ENCODE measurements at regions of chr10 and their contacts with region 1.

Region 1: GRCh38 chr10:16891375-16892313 is 74.4 kb upstream of the RSU1 start:
- DNase-seq: peak; percentile 35 to 95
- H3K4me3 ChIP-seq: peak overlapping the region; percentile 41; the same call in 1 of the 2 replicates
- H3K27ac ChIP-seq: peak overlapping the region; percentile 94
- H3K4me1 ChIP-seq: peaks cover 21% of the 10 kb centered on the region
- H3K27me3 ChIP-seq: peaks cover 6% of the 10 kb centered on the region; the same call in 1 of the 2 replicates
- CTCF ChIP-seq: peak; percentile 30; the same call in 1 of the 2 replicates

Region 2: DNA sequence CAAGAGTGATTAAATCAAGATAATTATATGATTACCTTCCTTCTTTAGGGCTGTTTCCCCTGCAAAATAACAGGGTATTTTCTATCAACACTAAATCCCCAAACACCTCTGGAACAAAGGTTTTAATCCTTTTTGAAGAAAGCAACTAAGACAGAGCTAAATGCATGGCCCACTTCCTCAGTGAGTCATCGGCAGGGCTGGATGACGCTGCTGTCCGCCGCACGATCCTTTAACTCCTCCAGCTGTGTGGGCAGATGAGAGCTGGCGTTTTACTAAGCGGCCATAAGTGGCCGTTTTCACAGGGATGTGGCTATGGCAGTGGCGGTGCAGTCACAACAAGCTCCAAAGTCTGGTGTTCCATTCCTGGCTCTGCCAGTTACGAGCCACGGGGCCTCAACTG is 294.0 kb before region 1 on chr10:
- CTCF ChIA-PET with region 1: no interaction called
- POLR2A ChIA-PET with region 1: no interaction called
- intact Hi-C with region 1: no loop called
- DNase-seq: no peak
- H3K4me3 ChIP-seq: no peak overlapping the region
- H3K27ac ChIP-seq: no peak overlapping the region
- H3K4me1 ChIP-seq: no peaks in the 10 kb centered on the region
- H3K27me3 ChIP-seq: no peaks in the 10 kb centered on the region
- CTCF ChIP-seq: no peak

Region 3: DNA sequence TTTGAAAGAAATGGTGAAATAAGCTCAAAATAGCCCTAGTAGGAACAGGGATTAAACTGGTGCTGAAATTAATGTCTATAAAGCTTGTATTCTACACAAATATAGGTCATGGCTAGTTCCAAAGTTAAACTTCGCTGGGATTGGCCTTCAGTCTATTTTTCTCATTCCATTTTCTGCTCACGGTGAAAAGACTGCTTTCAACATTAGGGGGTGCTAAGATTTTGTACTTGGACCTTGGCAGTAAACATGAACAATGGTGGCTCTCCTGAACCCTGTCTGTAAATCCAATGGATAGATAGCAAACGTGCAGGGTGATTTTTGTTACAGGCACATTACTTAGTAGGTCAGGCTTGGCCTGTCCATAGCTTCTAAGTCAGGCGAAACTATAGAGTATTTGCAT is 38.4 kb before region 1 on chr10:
- CTCF ChIA-PET with region 1: no interaction called
- POLR2A ChIA-PET with region 1: interaction called, 3 read pairs
- intact Hi-C with region 1: loop called (anchors 5 kb)
- DNase-seq: no peak
- H3K4me3 ChIP-seq: no peak overlapping the region
- H3K27ac ChIP-seq: no peak overlapping the region
- H3K4me1 ChIP-seq: no peaks in the 10 kb centered on the region
- H3K27me3 ChIP-seq: no peaks in the 10 kb centered on the region
- CTCF ChIP-seq: no peak

Region 4: GRCh38 chr10:16975188-16975587 is 83.5 kb after region 1 on chr10:
- CTCF ChIA-PET with region 1: no interaction called
- POLR2A ChIA-PET with region 1: interaction called, 13 read pairs
- intact Hi-C with region 1: no loop called
- DNase-seq: no peak
- H3K4me3 ChIP-seq: no peak overlapping the region
- H3K27ac ChIP-seq: no peak overlapping the region
- H3K4me1 ChIP-seq: no peaks in the 10 kb centered on the region
- H3K27me3 ChIP-seq: no peaks in the 10 kb centered on the region
- CTCF ChIP-seq: no peak

Region 5: DNA sequence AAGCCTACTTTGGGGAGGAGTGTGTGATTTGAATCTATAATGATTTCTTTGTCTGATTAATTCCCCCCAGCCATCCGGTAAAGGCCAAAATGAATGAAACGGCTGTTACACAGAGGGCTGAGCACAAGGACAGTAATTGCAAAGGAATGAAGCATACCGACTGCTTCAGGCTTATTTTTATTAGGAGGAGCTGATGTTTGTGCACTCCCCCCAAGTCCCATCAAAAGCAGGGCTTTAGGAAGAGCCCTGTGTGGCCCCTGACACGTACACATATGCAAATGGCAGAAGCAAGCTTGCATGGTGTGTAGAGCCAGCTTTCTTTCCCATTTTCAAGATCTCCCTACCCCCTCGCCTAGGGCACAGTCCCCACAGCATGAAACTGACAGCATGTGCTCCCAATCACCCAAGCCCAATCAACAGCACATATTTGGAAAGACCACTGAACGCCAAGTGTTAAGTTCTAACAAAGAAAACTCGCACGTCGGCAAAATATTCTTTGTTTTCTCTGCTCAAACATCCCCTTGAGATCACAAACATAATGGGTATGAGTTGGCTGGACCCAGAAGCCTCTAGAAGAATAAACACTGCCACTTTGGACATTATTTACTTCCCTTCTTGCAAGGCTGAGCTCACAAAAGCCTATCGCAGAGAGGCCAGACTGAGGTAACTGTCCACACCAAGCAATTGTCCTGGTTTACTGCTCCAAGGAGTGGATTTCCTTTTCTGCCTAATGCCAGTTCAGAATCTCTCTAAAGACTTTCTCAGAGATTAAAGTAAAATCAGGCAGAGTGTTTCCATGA is 95.0 kb after region 1 on chr10:
- CTCF ChIA-PET with region 1: no interaction called
- POLR2A ChIA-PET with region 1: interaction called, 13 read pairs
- intact Hi-C with region 1: no loop called
- DNase-seq: no peak
- H3K4me3 ChIP-seq: no peak overlapping the region
- H3K27ac ChIP-seq: no peak overlapping the region
- H3K4me1 ChIP-seq: no peaks in the 10 kb centered on the region
- H3K27me3 ChIP-seq: no peaks in the 10 kb centered on the region
- CTCF ChIP-seq: no peak

Region 6: DNA sequence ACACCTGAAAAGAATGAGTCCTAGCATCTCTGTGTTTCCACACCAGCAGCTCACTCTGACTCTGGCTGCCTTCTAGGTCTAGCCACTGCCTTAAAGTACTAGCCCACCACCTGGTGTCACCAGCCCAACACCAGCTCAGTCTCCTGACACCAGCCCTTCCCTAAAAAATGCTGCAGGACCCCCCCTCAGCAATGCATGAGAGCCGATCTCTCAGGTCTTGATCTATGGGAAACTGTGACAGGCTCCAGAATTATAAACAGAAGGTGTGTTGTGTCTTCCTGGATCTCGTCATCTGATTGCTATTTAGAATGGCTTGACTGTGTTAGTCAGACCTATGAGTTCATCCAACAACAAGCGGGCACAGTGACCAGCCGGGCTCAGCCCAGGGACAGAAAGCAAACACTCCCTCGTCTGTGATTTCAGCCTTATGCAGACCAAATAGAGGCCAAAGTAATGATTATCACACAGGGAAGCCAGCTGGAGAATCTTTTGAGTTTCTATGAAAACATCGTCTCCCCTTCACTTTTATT is 171.4 kb after region 1 on chr10:
- CTCF ChIA-PET with region 1: no interaction called
- POLR2A ChIA-PET with region 1: interaction called, 13 read pairs
- intact Hi-C with region 1: loop called (anchors 1 kb)
- DNase-seq: peak; percentile 73 to 88
- H3K4me3 ChIP-seq: peak overlapping the region; percentile 39; the same call in 1 of the 2 replicates
- H3K27ac ChIP-seq: peak overlapping the region; percentile 96
- H3K4me1 ChIP-seq: peaks cover 47% of the 10 kb centered on the region
- H3K27me3 ChIP-seq: no peaks in the 10 kb centered on the region
- CTCF ChIP-seq: no peak

Region 7: GRCh38 chr10:17200912-17201793 is 309.5 kb after region 1 on chr10 and contains the start of gene TRDMT1:
- CTCF ChIA-PET with region 1: no interaction called
- POLR2A ChIA-PET with region 1: interaction called, 3 read pairs
- intact Hi-C with region 1: loop called (anchors 1 kb)
- DNase-seq: peak; percentile 56 to 84
- H3K4me3 ChIP-seq: peak within 1 kb of the TSS; percentile 97
- H3K27ac ChIP-seq: peak within 1 kb of the TSS; percentile 68
- H3K4me1 ChIP-seq: peaks cover 16% of the 10 kb centered on the region
- H3K27me3 ChIP-seq: no peaks in the 10 kb centered on the region
- CTCF ChIP-seq: no peak
- total RNA-seq, gene TRDMT1: 3.2 and 4.2 TPM in 2 replicates

Region 8: DNA sequence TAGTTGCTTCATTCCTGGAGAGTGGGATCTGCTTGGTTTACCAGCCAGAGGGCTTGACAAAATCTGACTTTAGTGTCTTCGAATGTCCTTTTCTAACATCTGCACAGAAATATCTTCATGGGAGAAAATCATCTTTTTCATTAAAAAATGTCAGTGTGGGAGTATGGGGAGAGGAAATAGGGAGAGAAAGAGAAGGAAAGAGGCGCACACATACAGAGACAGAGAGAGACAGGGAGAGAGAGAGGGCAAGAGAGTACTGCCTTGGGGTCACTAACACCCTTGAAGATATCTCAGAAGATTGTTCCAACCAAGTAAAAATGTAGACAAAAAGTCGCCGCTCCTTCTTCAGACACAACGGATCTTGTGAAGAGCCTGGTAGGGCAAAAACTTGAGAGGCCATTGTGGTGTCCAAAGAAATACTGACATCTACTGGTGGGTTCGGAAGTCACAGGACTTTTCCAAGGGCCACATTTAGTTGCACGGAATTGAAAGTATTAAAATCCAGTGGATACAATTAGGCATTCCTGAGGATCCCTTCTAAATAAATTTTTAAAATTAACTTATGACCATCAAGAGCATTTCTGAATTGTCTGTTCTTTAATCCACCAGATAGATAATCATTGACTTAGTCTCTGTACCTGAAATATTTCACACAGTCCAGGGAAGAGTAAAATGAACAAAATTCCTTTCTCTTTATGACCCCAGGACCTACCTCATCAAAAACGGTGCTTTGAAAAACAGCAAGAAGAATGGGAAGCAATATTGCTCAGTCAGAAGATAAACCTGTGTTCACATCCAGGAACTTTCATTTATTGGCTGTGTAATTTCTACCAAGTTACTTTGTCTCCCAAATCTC is 366.1 kb after region 1 on chr10:
- CTCF ChIA-PET with region 1: no interaction called
- POLR2A ChIA-PET with region 1: no interaction called
- intact Hi-C with region 1: loop called (anchors 1 kb)
- DNase-seq: peak in 1 of 2 experiments; percentile 47
- H3K4me3 ChIP-seq: no peak overlapping the region
- H3K27ac ChIP-seq: no peak overlapping the region
- H3K4me1 ChIP-seq: no peaks in the 10 kb centered on the region
- H3K27me3 ChIP-seq: no peaks in the 10 kb centered on the region
- CTCF ChIP-seq: peak; percentile 75

Measured in PC-9 (cell line).